Caco-2 (cell line): ENCODE measurements at regions of chr1 and their contacts with region 1.

Region 1: GRCh38 chr1:99180343-99180808 is 83.9 kb upstream of the PLPPR4 start:
- DNase-seq: peak; percentile 52 to 57
- H3K4me3 ChIP-seq: no peak overlapping the region
- H3K4me3 Mint-ChIP-seq: no peak overlapping the region
- H3K27ac Mint-ChIP-seq: no peak overlapping the region
- H3K4me1 ChIP-seq: no peaks in the 10 kb centered on the region
- H3K4me1 Mint-ChIP-seq: no peaks in the 10 kb centered on the region
- H3K27me3 ChIP-seq: no peaks in the 10 kb centered on the region
- H3K27me3 Mint-ChIP-seq: peaks cover 7% of the 10 kb centered on the region
- CTCF ChIP-seq: peak; percentile 43 to 50

Region 2: GRCh38 chr1:99218999-99219398 is 38.6 kb after region 1 on chr1:
- CTCF ChIA-PET with region 1: no interaction called
- POLR2A ChIA-PET with region 1: no interaction called
- intact Hi-C with region 1: no loop called
- DNase-seq: no peak
- H3K4me3 ChIP-seq: no peak overlapping the region
- H3K4me3 Mint-ChIP-seq: no peak overlapping the region
- H3K27ac Mint-ChIP-seq: no peak overlapping the region
- H3K4me1 ChIP-seq: peaks cover 13% of the 10 kb centered on the region
- H3K4me1 Mint-ChIP-seq: no peaks in the 10 kb centered on the region
- H3K27me3 ChIP-seq: no peaks in the 10 kb centered on the region
- H3K27me3 Mint-ChIP-seq: no peaks in the 10 kb centered on the region
- CTCF ChIP-seq: no peak

Region 3: GRCh38 chr1:99305626-99306025 is 125.2 kb after region 1 on chr1:
- CTCF ChIA-PET with region 1: no interaction called
- POLR2A ChIA-PET with region 1: no interaction called
- intact Hi-C with region 1: no loop called
- DNase-seq: no peak
- H3K4me3 ChIP-seq: no peak overlapping the region
- H3K4me3 Mint-ChIP-seq: no peak overlapping the region
- H3K27ac Mint-ChIP-seq: no peak overlapping the region
- H3K4me1 ChIP-seq: no peaks in the 10 kb centered on the region
- H3K4me1 Mint-ChIP-seq: no peaks in the 10 kb centered on the region
- H3K27me3 ChIP-seq: no peaks in the 10 kb centered on the region
- H3K27me3 Mint-ChIP-seq: peaks cover 5% of the 10 kb centered on the region
- CTCF ChIP-seq: no peak

Region 4: GRCh38 chr1:99326215-99326949 is 146.0 kb after region 1 on chr1:
- CTCF ChIA-PET with region 1: no interaction called
- POLR2A ChIA-PET with region 1: no interaction called
- intact Hi-C with region 1: loop called (anchors 10 kb)
- DNase-seq: no peak
- H3K4me3 ChIP-seq: no peak overlapping the region
- H3K4me3 Mint-ChIP-seq: no peak overlapping the region
- H3K27ac Mint-ChIP-seq: no peak overlapping the region
- H3K4me1 ChIP-seq: no peaks in the 10 kb centered on the region
- H3K4me1 Mint-ChIP-seq: no peaks in the 10 kb centered on the region
- H3K27me3 ChIP-seq: no peaks in the 10 kb centered on the region
- H3K27me3 Mint-ChIP-seq: no peaks in the 10 kb centered on the region
- CTCF ChIP-seq: peak; percentile 12 to 23

Region 5: DNA sequence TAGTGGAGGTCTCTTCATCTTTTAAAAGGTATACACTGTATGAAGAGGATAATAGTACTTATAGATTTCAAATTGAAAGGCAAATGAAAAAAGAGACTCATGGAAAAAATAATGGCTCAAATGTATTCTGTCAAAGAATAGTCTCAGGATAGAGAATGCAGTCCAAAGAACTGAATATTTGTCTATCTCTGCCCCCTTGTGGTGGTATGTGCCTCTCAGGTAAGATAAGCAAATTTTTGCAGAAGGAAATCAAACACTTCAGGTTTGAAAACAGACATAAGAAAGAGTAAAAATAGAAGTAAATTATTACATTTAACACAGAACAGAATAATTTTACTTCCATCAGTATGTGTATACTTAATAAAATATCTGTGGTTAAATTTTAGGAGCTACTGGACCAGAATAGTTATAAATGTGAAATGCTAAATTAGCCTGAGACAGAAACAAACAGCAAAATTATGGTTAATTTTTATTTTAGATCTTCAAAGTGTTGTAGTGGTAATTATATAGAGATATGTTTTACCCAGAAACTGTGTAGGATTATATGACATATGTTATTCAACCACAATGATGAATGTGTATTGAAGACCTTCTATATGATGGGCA is 301.1 kb after region 1 on chr1:
- CTCF ChIA-PET with region 1: no interaction called
- POLR2A ChIA-PET with region 1: no interaction called
- intact Hi-C with region 1: loop called (anchors 1 kb)
- DNase-seq: peak; percentile 28 to 55
- H3K4me3 ChIP-seq: no peak overlapping the region
- H3K4me3 Mint-ChIP-seq: no peak overlapping the region
- H3K27ac Mint-ChIP-seq: no peak overlapping the region
- H3K4me1 ChIP-seq: no peaks in the 10 kb centered on the region
- H3K4me1 Mint-ChIP-seq: no peaks in the 10 kb centered on the region
- H3K27me3 ChIP-seq: no peaks in the 10 kb centered on the region
- H3K27me3 Mint-ChIP-seq: peaks cover 4% of the 10 kb centered on the region
- CTCF ChIP-seq: peak; percentile 21 to 60

Region 6: DNA sequence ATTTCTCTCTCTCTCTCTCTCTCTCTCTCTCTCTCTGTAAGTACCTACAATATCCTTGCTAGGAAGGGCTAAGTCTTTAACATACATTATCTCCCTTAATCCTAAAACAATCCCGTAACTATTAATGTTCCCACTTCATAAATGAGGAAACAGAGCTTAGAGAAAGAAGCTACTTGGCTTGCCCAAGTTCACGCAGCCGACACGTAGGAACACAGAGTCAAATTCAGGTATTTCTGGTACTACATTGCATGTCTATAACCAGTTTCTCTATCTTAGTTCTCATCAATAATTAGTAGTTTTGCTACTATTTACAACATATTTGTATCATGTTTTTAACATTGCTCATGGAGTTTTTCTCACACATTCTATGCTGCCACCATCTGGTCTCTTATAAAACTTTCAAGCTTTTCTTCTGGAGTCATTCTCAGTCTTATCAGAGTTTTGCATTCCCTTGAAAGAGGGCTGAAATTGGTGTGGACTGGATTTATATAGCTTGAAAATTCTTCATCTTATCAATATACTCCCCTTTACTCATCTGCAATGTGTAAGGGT is 346.6 kb after region 1 on chr1:
- CTCF ChIA-PET with region 1: no interaction called
- POLR2A ChIA-PET with region 1: no interaction called
- intact Hi-C with region 1: loop called (anchors 2 kb)
- DNase-seq: no peak
- H3K4me3 ChIP-seq: no peak overlapping the region
- H3K4me3 Mint-ChIP-seq: no peak overlapping the region
- H3K27ac Mint-ChIP-seq: no peak overlapping the region
- H3K4me1 ChIP-seq: no peaks in the 10 kb centered on the region
- H3K4me1 Mint-ChIP-seq: no peaks in the 10 kb centered on the region
- H3K27me3 ChIP-seq: no peaks in the 10 kb centered on the region
- H3K27me3 Mint-ChIP-seq: no peaks in the 10 kb centered on the region
- CTCF ChIP-seq: peak in 1 of 2 experiments; percentile 26

Region 7: DNA sequence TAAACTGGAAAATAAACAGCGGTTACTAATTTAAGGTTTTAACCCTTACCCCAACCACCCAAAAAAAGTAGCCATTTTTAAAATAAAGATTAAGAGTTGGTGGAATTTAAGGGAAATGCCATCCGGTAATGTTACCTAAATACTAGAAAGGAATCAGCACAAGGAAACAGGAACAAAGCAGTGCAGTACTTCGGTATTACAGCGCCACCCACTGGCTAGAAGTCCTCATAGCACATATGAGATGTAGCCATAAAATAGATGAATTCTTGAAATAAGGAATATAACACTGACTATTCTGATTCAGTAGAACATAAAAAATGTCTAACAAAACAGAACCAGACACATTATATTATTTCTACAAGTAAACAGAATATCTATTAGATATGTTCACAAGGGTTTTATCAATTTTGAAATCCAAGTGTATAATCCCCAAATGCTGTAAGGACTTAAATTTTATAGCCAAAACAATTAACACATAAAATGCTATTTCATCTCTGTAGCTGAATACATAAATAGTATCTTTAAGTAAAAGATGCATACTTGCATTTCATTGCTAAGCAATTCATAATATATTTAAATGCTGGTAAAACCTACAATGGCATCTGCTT is 527.3 kb after region 1 on chr1:
- CTCF ChIA-PET with region 1: no interaction called
- POLR2A ChIA-PET with region 1: no interaction called
- intact Hi-C with region 1: loop called (anchors 1 kb)
- DNase-seq: peak; percentile 40 to 51
- H3K4me3 ChIP-seq: no peak overlapping the region
- H3K4me3 Mint-ChIP-seq: no peak overlapping the region
- H3K27ac Mint-ChIP-seq: no peak overlapping the region
- H3K4me1 ChIP-seq: no peaks in the 10 kb centered on the region
- H3K4me1 Mint-ChIP-seq: no peaks in the 10 kb centered on the region
- H3K27me3 ChIP-seq: no peaks in the 10 kb centered on the region
- H3K27me3 Mint-ChIP-seq: no peaks in the 10 kb centered on the region
- CTCF ChIP-seq: peak; percentile 63

Region 8: GRCh38 chr1:99737016-99737415 is 556.6 kb after region 1 on chr1:
- CTCF ChIA-PET with region 1: no interaction called
- POLR2A ChIA-PET with region 1: no interaction called
- intact Hi-C with region 1: loop called (anchors 1 kb)
- DNase-seq: peak; percentile 34 to 45
- H3K4me3 ChIP-seq: no peak overlapping the region
- H3K4me3 Mint-ChIP-seq: no peak overlapping the region
- H3K27ac Mint-ChIP-seq: no peak overlapping the region
- H3K4me1 ChIP-seq: peaks cover 13% of the 10 kb centered on the region
- H3K4me1 Mint-ChIP-seq: peaks cover 12% of the 10 kb centered on the region
- H3K27me3 ChIP-seq: no peaks in the 10 kb centered on the region
- H3K27me3 Mint-ChIP-seq: no peaks in the 10 kb centered on the region
- CTCF ChIP-seq: peak in 1 of 2 experiments; percentile 37